Esophagus muscularis mucosa (tissue), 4 donors: ENCODE measurements at regions of chr4 and their contacts with region 1.

Region 1: GRCh38 chr4:109433205-109434006 is at the start of gene SEC24B:
- DNase-seq: peak; percentile 96
- H3K4me3 ChIP-seq: peak within 1 kb of the TSS; percentile 88 to 91 (median 88)
- H3K27ac ChIP-seq: peak within 1 kb of the TSS; percentile 93 to 95 (median 94)
- H3K4me1 ChIP-seq: peaks cover 33 to 53% (median 49%) of the 10 kb centered on the region in 4 donors
- H3K27me3 ChIP-seq: no peaks in the 10 kb centered on the region
- CTCF ChIP-seq: peak; percentile 82 to 98 (median 96)
- EP300 ChIP-seq: no peak
- POLR2A ChIP-seq: no peak
- total RNA-seq, gene SEC24B: 34.5 to 46.5 (median 37.0) TPM

Region 2: DNA sequence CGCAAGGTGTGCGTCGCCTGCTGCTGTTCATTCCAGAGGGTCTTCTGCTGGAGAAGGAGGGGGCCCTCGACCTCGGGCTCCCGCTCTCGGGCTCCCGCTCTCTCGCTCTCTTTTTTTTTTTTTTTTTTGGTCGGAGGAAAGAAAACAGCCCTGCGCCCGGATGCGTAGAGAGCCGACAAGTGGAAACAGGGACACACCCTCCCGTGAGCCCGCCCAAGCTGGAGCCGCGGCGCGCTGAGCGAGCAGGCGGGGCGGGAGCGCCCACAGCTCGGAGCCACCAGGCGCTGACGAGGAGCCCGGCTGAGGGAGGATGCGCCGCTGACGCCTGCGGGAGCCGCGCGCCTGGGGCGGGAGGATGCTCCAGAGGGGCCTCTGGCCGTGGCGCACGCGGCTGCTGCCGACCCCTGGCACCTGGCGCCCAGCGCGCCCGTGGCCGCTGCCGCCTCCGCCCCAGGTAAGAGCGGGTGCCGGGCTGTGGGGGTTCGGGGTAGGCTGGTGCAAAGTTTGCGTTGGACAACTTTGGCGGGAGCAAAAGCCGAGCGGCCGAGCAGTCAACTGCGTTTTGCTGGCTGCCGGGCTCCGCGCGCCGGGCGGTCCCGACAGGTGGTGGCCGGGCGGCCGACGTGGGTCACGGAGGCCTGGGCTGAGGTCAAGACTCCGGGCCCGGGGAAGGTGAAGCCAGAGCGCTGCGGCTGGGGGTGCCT is 126.7 kb after region 1 on chr4 and contains the start of gene MCUB:
- intact Hi-C with region 1: loop called (anchors 5 kb)
- DNase-seq: peak; percentile 96
- H3K4me3 ChIP-seq: peak within 1 kb of the TSS; percentile 63 to 86 (median 69)
- H3K27ac ChIP-seq: peak within 1 kb of the TSS; percentile 81 to 86 (median 84)
- H3K4me1 ChIP-seq: peaks cover 5 to 31% (median 18%) of the 10 kb centered on the region in 4 donors
- H3K27me3 ChIP-seq: no peaks in the 10 kb centered on the region
- CTCF ChIP-seq: no peak
- EP300 ChIP-seq: no peak
- POLR2A ChIP-seq: no peak
- total RNA-seq, gene MCUB: 7.9 to 25.6 (median 15.1) TPM

Region 3: DNA sequence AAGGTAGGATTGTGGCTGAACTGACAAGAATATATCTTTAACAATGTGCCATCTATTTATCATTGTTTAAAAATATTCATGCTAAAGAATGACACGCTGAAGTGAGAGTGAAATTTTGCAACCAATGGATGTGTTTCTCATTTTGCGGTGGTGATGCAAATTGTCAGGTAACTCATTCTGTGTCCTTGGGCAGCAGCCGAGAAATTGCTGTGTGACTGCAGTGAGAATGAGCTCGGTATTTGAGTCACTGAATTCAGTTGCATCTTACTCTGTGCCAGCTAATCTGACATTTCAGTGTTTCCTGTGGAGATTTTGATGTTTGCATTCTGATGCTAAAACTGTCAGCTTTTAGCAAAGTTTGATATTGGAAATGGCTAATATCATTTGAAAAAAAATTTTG is 154.8 kb after region 1 on chr4:
- intact Hi-C with region 1: no loop called
- DNase-seq: no peak
- H3K4me3 ChIP-seq: no peak overlapping the region
- H3K27ac ChIP-seq: no peak overlapping the region
- H3K4me1 ChIP-seq: peaks cover 0 to 8% (median 4%) of the 10 kb centered on the region in 4 donors
- H3K27me3 ChIP-seq: no peaks in the 10 kb centered on the region
- CTCF ChIP-seq: no peak
- EP300 ChIP-seq: no peak
- POLR2A ChIP-seq: no peak

Region 4: DNA sequence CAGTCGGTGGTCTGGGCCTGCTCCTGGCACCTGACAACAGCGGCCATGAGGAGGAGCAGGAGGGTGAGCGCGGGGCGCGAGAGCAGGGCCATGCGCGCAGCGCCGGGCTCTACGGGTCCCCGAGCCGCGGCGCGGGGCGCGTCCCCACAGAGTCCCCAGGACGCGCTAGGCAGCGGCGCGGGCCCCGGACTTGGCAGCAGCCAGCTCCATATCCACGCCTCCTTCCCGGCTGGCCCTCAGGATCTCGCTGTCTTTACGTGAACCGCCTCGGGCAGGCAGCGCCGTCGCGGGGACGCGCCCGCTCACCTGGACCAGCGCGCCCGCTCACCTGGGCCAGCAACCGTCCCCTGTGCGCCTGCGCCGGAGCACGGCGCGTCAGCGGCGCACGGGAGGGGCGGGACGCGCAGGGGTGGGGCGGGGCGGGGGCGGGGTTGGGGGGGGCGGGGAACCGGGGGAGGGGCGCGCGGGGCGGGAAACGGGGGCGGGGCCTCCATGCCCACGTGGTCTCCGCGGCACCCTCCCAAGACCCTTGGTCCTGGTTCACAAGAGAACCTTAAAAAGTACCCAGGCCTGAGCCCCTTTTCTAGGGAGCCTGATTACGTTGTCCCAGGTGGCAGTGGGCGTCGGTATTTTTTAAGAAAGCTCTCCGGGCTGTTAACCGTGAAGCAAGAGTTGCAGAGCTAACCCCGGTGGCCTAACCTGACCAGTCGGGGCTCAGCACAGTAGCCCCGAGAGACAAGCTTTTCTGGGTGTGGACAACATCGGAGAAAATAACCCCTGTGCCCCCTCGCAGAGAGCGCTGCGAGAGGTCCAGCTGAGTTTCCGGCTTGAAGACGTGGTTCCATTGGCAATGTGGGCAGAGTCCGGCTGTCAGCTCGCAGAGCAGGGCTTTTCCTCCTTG is 296.6 kb after region 1 on chr4 and contains the start of gene PLA2G12A:
- intact Hi-C with region 1: loop called (anchors 5 kb)
- DNase-seq: no peak
- H3K4me3 ChIP-seq: peak within 1 kb of the TSS; percentile 78 to 93 (median 88)
- H3K27ac ChIP-seq: peak within 1 kb of the TSS; percentile 76 to 80 (median 78)
- H3K4me1 ChIP-seq: peaks cover 13 to 20% (median 15%) of the 10 kb centered on the region in 4 donors
- H3K27me3 ChIP-seq: no peaks in the 10 kb centered on the region
- CTCF ChIP-seq: no peak
- EP300 ChIP-seq: no peak
- POLR2A ChIP-seq: no peak
- total RNA-seq, gene PLA2G12A: 18.8 to 24.5 (median 23.4) TPM

Region 5: GRCh38 chr4:109820563-109820962 is 387.2 kb after region 1 on chr4:
- intact Hi-C with region 1: loop called (anchors 5 kb)
- DNase-seq: no peak
- H3K4me3 ChIP-seq: no peak overlapping the region
- H3K27ac ChIP-seq: no peak overlapping the region
- H3K4me1 ChIP-seq: peaks cover 7 to 17% (median 13%) of the 10 kb centered on the region in 4 donors
- H3K27me3 ChIP-seq: no peaks in the 10 kb centered on the region
- CTCF ChIP-seq: no peak
- EP300 ChIP-seq: no peak
- POLR2A ChIP-seq: no peak